Activated CD8-positive, alpha-beta T cell treated with anti-CD3 and anti-CD28 coated beads, Interleukin-2, amount 10 ng/mL, durations not matched to agents 7 days and 5 days (primary cell): ENCODE measurements at regions of chr15 and their contacts with region 1.

Region 1: DNA sequence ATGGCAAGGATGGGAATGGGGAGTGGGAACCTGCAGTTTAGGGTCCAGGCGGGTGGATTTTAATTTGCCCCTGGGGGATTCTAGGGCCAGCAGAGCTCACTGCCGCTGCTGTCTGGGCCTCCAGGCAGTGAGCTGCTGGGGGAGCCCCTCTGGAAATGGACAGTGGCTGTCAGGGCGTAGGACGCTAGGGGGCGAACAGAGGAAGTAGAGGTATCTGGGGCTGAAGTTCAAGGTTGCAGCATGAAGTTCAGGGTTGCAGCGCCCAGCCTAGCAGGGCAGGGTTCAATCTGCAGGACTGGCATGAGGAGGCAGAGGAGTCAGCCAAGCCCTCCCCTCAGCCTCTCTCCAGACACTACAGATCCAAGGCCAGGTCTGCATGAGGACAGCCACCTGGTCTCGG is 49.6 kb downstream of the APBA2 start:
- DNase-seq: peak; percentile 82
- ATAC-seq: peak; percentile 76
- H3K4me3 Mint-ChIP-seq: no peak overlapping the region
- H3K27ac Mint-ChIP-seq: peak overlapping the region; percentile 27
- H3K4me1 Mint-ChIP-seq: peaks cover 70% of the 10 kb centered on the region
- H3K27me3 Mint-ChIP-seq: no peaks in the 10 kb centered on the region

Region 2: DNA sequence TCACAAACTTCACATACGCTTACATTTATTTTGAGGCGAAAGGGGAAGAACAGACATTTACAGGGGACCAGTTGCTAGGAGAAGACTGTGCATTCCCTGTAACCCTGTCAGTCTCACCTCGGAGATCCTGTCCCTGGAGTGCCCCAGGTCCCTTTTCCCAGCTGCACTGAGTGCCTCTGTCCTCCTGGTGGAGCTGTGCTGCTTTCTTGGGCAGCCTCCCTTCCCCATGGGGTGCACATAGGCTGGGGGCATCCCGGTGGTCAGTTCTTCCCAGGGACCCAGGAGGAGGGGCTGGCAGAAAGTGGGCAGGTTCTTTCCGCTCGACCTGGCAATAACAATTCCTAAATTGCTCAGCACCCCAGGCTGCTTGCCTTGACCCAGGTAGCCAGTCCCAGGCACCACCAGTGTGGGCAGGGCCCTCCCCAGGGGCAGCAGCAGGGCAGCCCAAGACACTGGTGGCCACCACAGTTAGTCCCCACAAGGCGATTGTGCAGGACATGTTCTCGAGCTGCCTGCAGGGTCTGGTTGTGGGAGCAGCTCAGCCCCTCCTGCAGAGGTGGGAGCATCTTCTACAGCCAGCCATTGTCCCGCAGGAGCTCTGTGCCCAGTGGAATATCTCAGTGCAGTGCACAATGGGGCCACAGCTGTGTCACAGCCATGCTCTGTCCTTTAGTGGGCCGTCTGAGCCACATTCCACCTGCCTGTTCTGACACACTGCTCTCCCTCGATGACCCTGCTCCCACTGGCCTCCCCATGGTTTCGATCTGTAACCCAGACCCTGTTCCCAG is 13.2 kb before region 1 on chr15:
- CTCF ChIA-PET with region 1: interaction called, 46 read pairs
- POLR2A ChIA-PET with region 1: no interaction called
- DNase-seq: no peak
- ATAC-seq: no peak
- H3K4me3 Mint-ChIP-seq: no peak overlapping the region
- H3K27ac Mint-ChIP-seq: peak overlapping the region; percentile 23
- H3K4me1 Mint-ChIP-seq: peaks cover 58% of the 10 kb centered on the region
- H3K27me3 Mint-ChIP-seq: no peaks in the 10 kb centered on the region

Region 3: GRCh38 chr15:28955160-28956008 is 20.1 kb after region 1 on chr15:
- CTCF ChIA-PET with region 1: interaction called, 13 read pairs
- POLR2A ChIA-PET with region 1: interaction called, 4 read pairs
- DNase-seq: peak; percentile 60
- ATAC-seq: peak; percentile 80
- H3K4me3 Mint-ChIP-seq: peak overlapping the region; percentile 48
- H3K27ac Mint-ChIP-seq: peak overlapping the region; percentile 81
- H3K4me1 Mint-ChIP-seq: peaks cover 48% of the 10 kb centered on the region
- H3K27me3 Mint-ChIP-seq: no peaks in the 10 kb centered on the region